WTC11 (cell line): ENCODE measurements at regions of chr1 and their contacts with region 1.

Region 1: GRCh38 chr1:181142096-181142958 is 53.8 kb downstream of the IER5 start:
- DNase-seq: peak; percentile 94
- ATAC-seq: peak; percentile 96
- H3K4me3 Mint-ChIP-seq: peak overlapping the region; percentile 59
- H3K27ac Mint-ChIP-seq: no peak overlapping the region
- H3K4me1 Mint-ChIP-seq: peaks cover 10% of the 10 kb centered on the region
- H3K27me3 Mint-ChIP-seq: peaks cover 13% of the 10 kb centered on the region
- CTCF ChIP-seq: peak; percentile 96

Region 2: DNA sequence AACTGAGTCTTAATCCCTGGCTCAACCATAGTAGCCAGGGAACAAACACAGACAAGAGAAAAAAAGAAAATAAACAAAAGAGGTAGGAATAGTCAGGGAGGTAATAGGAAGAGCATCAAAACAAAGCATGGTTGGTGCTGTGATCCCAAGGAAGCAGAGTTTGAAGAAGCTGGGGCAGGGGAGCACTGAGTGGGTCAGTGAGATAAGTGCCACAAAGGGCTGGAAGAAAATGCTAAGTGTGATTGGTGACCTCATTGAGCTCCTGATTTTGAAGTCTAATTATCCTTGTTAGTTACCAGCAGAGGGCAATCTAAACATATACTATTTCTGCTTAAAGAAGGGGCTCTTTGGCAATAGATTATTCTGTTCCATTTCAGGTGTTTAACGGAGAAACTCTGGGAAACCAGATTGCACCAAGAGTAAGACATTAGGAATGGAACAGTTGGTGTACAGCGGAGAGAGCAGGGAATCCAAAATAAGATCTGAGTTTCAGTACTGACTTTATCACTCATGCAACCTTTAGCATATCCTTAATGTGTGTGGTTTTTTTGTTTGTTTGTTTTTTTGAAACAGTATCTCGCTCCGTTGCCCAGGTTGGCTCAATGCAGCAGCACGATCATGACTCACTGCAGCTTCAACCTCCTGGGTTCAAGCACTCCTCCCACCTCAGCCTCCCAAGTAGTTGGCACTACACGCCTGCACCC is 260.4 kb before region 1 on chr1:
- CTCF ChIA-PET with region 1: interaction called, 12 read pairs
- POLR2A ChIA-PET with region 1: no interaction called
- DNase-seq: no peak
- ATAC-seq: peak; percentile 86
- H3K4me3 Mint-ChIP-seq: no peak overlapping the region
- H3K27ac Mint-ChIP-seq: peak overlapping the region; percentile 76
- H3K4me1 Mint-ChIP-seq: peaks cover 4% of the 10 kb centered on the region; the same call in 1 of the 2 replicates
- H3K27me3 Mint-ChIP-seq: no peaks in the 10 kb centered on the region
- CTCF ChIP-seq: no peak

Region 3: DNA sequence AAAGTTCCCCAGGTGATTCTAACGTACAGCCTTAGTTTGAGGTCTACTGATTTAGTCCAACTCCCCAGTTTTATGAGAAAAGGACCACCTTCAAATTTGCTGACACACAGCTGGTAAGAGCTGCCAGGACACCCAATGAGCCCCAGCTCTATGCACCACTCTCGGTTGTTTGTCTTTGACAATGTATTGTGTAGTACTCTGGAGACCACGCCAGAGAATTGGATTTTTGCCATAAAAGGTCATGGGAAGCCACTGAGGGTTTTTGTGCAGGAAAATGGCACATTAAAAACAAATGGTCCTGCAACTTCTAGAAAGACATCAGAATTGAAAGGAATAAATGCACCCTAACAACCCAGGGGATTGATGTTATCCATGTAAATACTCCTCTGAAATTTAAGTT is 60.9 kb before region 1 on chr1:
- CTCF ChIA-PET with region 1: interaction called, 43 read pairs
- POLR2A ChIA-PET with region 1: interaction called, 3 read pairs
- DNase-seq: no peak
- ATAC-seq: no peak
- H3K4me3 Mint-ChIP-seq: no peak overlapping the region
- H3K27ac Mint-ChIP-seq: no peak overlapping the region
- H3K4me1 Mint-ChIP-seq: peaks cover 18% of the 10 kb centered on the region
- H3K27me3 Mint-ChIP-seq: peaks cover 2% of the 10 kb centered on the region; the same call in 1 of the 2 replicates
- CTCF ChIP-seq: no peak

Region 4: GRCh38 chr1:181099152-181100014 is 42.9 kb before region 1 on chr1:
- CTCF ChIA-PET with region 1: interaction called, 24 read pairs
- POLR2A ChIA-PET with region 1: interaction called, 4 read pairs
- DNase-seq: no peak
- ATAC-seq: no peak
- H3K4me3 Mint-ChIP-seq: peak overlapping the region; percentile 19
- H3K27ac Mint-ChIP-seq: peak overlapping the region; percentile 2; the same call in 1 of the 2 replicates
- H3K4me1 Mint-ChIP-seq: peaks cover 97% of the 10 kb centered on the region
- H3K27me3 Mint-ChIP-seq: peaks cover 66% of the 10 kb centered on the region
- CTCF ChIP-seq: no peak

Region 5: DNA sequence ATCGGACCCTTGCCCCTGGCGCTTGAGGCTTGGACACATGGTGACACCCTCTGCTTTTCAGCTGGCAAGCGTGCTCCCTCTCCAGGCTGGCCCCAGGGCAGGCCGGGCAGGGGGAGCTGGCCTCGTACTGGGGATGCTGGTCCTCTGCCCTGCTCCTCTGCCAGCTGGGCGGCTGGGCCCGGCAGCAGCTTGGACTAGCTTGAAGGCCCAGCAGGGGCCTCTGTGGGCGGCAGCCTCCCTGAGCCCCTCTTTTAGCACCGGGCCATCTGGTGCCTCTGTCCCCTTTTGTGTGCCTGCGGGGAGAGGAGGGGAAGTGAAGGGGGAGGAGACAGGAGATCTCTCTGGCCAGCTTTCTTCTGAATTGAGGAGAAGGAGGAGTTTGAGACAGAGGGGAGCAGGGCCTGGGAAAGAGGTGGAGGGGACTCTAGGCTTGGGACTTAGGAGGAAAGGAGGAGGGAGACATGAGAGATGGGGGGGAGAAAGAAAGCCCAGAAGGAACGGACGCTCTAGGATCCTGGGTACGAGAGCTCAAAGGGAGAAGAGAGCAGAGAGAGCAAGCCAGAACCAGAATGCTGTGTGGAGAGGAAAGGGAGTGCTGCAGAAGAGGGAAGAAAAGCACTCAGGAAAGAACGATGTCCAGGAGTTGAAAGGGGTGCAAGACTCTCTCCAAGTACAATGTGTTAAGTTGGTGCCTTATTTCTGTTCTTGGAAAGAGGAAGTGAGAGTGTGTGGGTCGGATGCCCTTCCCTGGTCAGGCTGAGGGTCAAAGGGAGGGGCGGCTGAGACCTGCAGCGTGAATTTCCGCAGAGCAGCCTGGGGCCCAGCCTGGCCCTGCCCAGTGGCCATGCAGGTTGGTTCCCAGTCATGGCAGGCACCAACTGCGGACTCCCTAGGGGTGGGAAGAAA is 13.5 kb before region 1 on chr1:
- CTCF ChIA-PET with region 1: interaction called, 20 read pairs
- POLR2A ChIA-PET with region 1: no interaction called
- DNase-seq: no peak
- ATAC-seq: peak; percentile 67
- H3K4me3 Mint-ChIP-seq: peak overlapping the region; percentile 31
- H3K27ac Mint-ChIP-seq: peak overlapping the region; percentile 8; the same call in 1 of the 2 replicates
- H3K4me1 Mint-ChIP-seq: peaks cover 60% of the 10 kb centered on the region
- H3K27me3 Mint-ChIP-seq: peaks cover 7% of the 10 kb centered on the region; the same call in 1 of the 2 replicates
- CTCF ChIP-seq: no peak

Region 6: DNA sequence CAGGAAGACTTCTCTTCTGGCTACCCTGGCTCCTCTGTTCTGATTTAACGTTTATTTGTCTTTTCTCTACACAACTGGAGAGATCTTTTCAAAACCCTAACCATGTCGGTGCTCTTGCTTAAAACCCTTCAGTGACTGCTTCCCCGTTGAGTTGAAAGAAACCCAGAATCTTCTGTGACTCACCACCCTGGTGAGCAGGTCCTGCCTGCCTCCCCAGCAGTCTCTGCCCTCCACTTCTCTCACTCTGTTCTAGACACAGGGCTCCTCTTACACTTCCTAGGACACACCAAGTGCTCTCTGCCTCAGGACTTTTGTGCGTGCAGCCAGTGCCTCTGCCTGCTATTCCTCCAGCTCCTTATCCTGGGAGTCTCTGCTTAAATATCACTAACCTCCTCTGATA is 77.6 kb after region 1 on chr1:
- CTCF ChIA-PET with region 1: no interaction called
- POLR2A ChIA-PET with region 1: no interaction called
- DNase-seq: no peak
- ATAC-seq: no peak
- H3K4me3 Mint-ChIP-seq: no peak overlapping the region
- H3K27ac Mint-ChIP-seq: no peak overlapping the region
- H3K4me1 Mint-ChIP-seq: peaks cover 27% of the 10 kb centered on the region
- H3K27me3 Mint-ChIP-seq: no peaks in the 10 kb centered on the region; the same call in 1 of the 2 replicates
- CTCF ChIP-seq: no peak